ENCODE measurements at regions of chr16 and their contacts with region 1.

Region 1: DNA sequence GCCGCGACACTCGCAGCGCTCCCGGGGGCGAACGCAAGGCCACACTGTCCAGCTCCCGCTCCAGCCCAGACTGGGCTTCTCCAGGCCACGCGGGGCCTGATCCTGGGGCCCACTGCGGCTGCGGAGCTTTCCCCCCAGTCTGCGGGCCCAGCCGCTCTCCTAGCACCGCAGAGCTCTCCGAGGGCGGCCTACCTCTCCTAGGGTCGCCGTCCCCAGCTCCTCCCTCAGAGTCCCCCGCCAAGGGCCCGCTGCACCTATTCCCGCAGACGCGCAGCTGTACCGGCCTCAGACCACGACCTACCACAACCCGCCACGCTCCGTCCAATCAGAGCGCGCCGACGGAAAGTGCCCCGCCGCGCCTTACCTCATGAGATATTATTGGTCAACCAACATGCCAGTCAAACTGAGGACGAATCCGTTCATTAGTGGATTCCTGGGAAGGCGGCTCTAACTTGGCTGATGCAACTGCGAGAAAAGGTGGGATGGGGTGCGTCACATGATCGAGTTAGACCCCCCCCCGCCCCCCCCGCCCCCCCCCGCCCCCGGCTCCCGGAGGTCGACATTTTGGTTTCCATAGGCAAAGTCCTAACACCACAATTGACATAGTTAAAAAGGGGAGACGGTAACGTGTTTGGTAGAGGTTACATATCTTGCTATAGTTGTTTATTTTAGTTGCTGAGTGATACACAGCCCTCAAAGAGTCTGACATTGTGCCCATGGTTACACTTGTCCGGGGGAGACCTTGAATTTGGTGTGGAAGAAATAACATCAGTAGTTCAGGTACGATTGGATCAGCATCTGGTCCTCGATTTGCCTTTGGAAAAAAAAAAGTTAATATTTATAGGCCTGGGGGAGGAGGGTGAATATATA is at the start of gene AARS1:
- DNase-seq: peak; percentile 95 to 96 (median 95)
- H3K4me3 ChIP-seq: peak within 1 kb of the TSS; percentile 60 to 87 (median 82)
- H3K4me3 Mint-ChIP-seq: peak within 1 kb of the TSS; percentile 96 to 98
- H3K27ac ChIP-seq: peak within 1 kb of the TSS; percentile 64 to 87
- H3K27ac Mint-ChIP-seq: peak within 1 kb of the TSS; percentile 83 to 96 (median 90)
- H3K4me1 ChIP-seq: peaks cover 11% of the 10 kb centered on the region in 2 donors
- H3K4me1 Mint-ChIP-seq: peaks cover 11% of the 10 kb centered on the region
- H3K27me3 ChIP-seq: no peaks in the 10 kb centered on the region
- H3K27me3 Mint-ChIP-seq: peaks cover 0 to 1% (median 0%) of the 10 kb centered on the region in 3 donors
- CTCF ChIP-seq: no peak
- polyA plus RNA-seq, gene AARS1: 13.9 to 16.6 (median 16.3) TPM

Region 2: GRCh38 chr16:70304892-70305448 is 15.5 kb after region 1 on chr16:
- intact Hi-C with region 1: no loop called
- DNase-seq: no peak
- H3K4me3 ChIP-seq: peak overlapping the region in 1 of 3 experiments; percentile 8
- H3K4me3 Mint-ChIP-seq: peak overlapping the region; percentile 58 to 73
- H3K27ac ChIP-seq: peak overlapping the region in 1 of 2 donors; percentile 80
- H3K27ac Mint-ChIP-seq: peak overlapping the region; percentile 81 to 94 (median 88)
- H3K4me1 ChIP-seq: peaks cover 19 to 23% of the 10 kb centered on the region in 2 donors
- H3K4me1 Mint-ChIP-seq: peaks cover 33% of the 10 kb centered on the region
- H3K27me3 ChIP-seq: no peaks in the 10 kb centered on the region
- H3K27me3 Mint-ChIP-seq: no peaks in the 10 kb centered on the region
- CTCF ChIP-seq: no peak

Region 3: GRCh38 chr16:70324998-70325747 is 35.7 kb after region 1 on chr16:
- intact Hi-C with region 1: no loop called
- DNase-seq: no peak
- H3K4me3 ChIP-seq: no peak overlapping the region
- H3K4me3 Mint-ChIP-seq: no peak overlapping the region
- H3K27ac ChIP-seq: no peak overlapping the region
- H3K27ac Mint-ChIP-seq: no peak overlapping the region
- H3K4me1 ChIP-seq: no peaks in the 10 kb centered on the region
- H3K4me1 Mint-ChIP-seq: no peaks in the 10 kb centered on the region
- H3K27me3 ChIP-seq: no peaks in the 10 kb centered on the region
- H3K27me3 Mint-ChIP-seq: no peaks in the 10 kb centered on the region
- CTCF ChIP-seq: no peak

Region 4: GRCh38 chr16:70342016-70342415 is 52.6 kb after region 1 on chr16:
- intact Hi-C with region 1: loop called (anchors 2 to 10 kb)
- DNase-seq: no peak
- H3K4me3 ChIP-seq: no peak overlapping the region
- H3K4me3 Mint-ChIP-seq: no peak overlapping the region
- H3K27ac ChIP-seq: no peak overlapping the region
- H3K27ac Mint-ChIP-seq: no peak overlapping the region
- H3K4me1 ChIP-seq: peaks cover 5 to 7% of the 10 kb centered on the region in 2 donors
- H3K4me1 Mint-ChIP-seq: peaks cover 6% of the 10 kb centered on the region
- H3K27me3 ChIP-seq: no peaks in the 10 kb centered on the region
- H3K27me3 Mint-ChIP-seq: peaks cover 0 to 4% (median 1%) of the 10 kb centered on the region in 3 donors
- CTCF ChIP-seq: no peak